ENCODE measurements at regions of chr2 and their contacts with region 1.

Region 1: GRCh38 chr2:68751397-68752339 is 17.1 kb downstream of the ARHGAP25 start:
- DNase-seq: peak; percentile 97
- ATAC-seq: peak; percentile 94

Region 2: GRCh38 chr2:68594674-68595492 is 156.8 kb before region 1 on chr2:
- intact Hi-C with region 1: no loop called
- DNase-seq: no peak
- ATAC-seq: no peak

Region 3: GRCh38 chr2:68726608-68727367 is 24.9 kb before region 1 on chr2:
- intact Hi-C with region 1: no loop called
- DNase-seq: no peak
- ATAC-seq: peak; percentile 67

Region 4: DNA sequence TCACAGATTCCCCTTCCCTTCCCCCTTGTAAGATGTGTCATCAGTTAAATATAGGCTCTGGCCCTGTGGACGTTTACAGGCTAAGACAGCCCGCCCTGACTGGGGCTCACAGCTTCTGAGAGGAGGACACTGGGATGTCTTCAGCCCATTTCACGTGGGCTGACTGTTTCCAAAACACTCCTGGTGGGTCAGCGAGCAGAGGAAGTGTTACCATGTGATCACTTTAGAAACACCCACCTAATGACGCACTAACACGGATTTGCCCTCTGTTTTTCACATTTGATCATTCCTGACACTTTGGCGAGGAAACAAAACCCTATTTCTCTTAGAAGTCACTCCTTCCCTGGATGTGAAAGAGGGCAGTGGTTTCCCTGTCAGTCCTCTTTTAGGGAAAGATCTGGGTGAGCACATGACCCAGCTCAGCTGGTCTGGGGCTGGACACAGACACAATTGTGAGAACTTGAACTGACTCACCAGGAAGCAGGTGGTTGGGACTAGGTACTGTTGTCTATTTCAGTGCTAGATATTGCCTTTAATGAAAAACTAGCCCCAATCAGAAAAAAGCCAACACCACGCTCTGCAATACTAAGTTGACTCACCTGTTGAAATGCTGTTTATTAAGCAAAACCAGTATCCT is 80.7 kb after region 1 on chr2:
- intact Hi-C with region 1: loop called (anchors 10 kb)
- DNase-seq: peak; percentile 77
- ATAC-seq: peak; percentile 78

Region 5: GRCh38 chr2:68909793-68910674 is 158.4 kb after region 1 on chr2:
- intact Hi-C with region 1: loop called (anchors 5 kb)
- DNase-seq: peak; percentile 88
- ATAC-seq: peak; percentile 65

Region 6: GRCh38 chr2:69535817-69536241 is 784.2 kb after region 1 on chr2:
- intact Hi-C with region 1: no loop called
- DNase-seq: no peak
- ATAC-seq: no peak